ENCODE measurements at regions of chr6 and their contacts with region 1.

Region 1: DNA sequence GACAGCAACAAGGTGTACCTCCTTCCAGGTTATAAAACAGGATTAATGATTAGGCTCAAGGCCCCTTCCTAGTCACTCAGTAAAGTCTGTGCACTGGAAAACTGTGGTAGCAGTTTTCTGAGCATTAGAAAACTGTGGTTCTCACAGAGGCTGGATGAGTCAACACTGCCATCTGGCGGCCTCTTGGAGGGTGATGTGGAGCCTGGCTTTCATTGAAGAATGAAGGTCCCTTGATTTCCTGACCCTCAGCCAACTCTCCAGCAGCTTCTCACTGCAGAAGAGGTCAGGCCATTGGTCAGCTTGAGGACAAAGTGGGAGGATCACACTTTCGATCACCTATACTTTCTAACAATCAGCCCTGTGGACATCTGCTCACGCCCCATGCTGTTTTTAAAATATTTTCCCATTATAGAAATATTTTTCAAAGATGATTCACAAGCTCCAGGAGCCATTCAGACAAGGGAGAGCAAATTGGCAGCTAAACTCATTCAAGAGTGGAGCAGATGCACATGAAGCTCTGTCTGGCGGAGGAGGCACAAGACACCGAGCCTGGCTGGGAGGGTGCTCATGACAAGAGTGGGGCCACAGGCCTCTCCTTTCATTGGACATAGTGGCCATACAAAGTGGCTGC is 23.2 kb downstream of the PSMB1 start:
- DNase-seq: peak; percentile 76 to 88
- ATAC-seq: peak; percentile 80
- H3K4me3 ChIP-seq: no peak overlapping the region
- H3K27ac ChIP-seq: no peak overlapping the region
- H3K4me1 ChIP-seq: no peaks in the 10 kb centered on the region
- H3K27me3 ChIP-seq: no peaks in the 10 kb centered on the region

Region 2: GRCh38 chr6:169831450-169832246 is 698.3 kb before region 1 on chr6:
- intact Hi-C with region 1: loop called (anchors 2 to 5 kb)
- DNase-seq: peak; percentile 79 to 93
- ATAC-seq: peak; percentile 80
- H3K4me3 ChIP-seq: no peak overlapping the region
- H3K27ac ChIP-seq: no peak overlapping the region
- H3K4me1 ChIP-seq: no peaks in the 10 kb centered on the region
- H3K27me3 ChIP-seq: no peaks in the 10 kb centered on the region

Measured in aorta (tissue), 5 donors.